CD8-positive, alpha-beta T cell (primary cell): ENCODE measurements at regions of chr1 and their contacts with region 1.

Region 1: DNA sequence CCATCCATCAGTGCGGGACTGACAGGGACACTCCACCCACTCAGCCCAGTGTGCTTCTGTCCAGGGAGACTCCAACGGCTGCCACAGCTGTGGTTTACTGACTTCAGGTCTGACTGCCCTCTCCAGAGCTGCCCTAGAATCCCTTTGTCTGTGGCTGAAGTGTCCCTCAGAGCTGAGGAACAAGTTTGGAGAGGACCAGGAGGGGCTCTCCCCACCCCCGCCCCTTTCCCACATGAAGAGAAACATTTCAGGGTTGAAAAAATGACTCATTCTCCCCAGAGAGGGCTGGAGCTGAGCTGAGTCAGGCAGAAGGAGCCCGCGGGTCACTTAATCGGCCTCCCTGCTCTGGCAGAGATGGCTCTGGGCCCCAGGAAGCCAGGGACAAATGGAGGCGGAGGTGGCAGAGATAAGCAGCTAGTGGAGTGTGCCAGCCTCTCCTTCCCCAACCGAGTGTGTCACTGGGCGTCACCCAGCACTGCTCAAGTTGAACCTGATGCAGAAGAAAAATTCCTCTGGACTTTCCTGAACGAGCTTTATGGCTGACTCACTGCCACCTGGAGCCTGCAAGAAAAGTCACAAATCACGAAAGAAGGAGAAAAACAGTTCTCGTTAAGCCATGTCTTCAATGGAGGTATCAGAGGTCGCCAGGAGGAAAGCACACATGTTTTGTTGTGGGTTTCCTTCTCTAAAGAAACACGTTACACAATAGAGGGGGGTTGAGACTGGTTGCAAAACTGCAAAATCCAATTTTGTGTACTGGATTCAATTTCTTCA is 34.3 kb upstream of the ECE1 start:
- DNase-seq: peak in 8 of 9 experiments; percentile 26 to 71 (median 64)
- ATAC-seq: peak; percentile 64
- H3K4me3 ChIP-seq: peak overlapping the region in 1 of 2 experiments; percentile 4
- H3K4me3 Mint-ChIP-seq: peak overlapping the region; percentile 76
- H3K27ac ChIP-seq: peak overlapping the region; percentile 13 to 51
- H3K27ac Mint-ChIP-seq: peak overlapping the region; percentile 96
- H3K4me1 ChIP-seq: peaks cover 61% of the 10 kb centered on the region
- H3K4me1 Mint-ChIP-seq: peaks cover 74% of the 10 kb centered on the region
- H3K27me3 ChIP-seq: no peaks in the 10 kb centered on the region
- H3K27me3 Mint-ChIP-seq: no peaks in the 10 kb centered on the region
- CTCF ChIP-seq: no peak

Region 2: GRCh38 chr1:21287905-21288514 is 36.5 kb before region 1 on chr1:
- CTCF ChIA-PET with region 1: interaction called, 31 read pairs
- POLR2A ChIA-PET with region 1: interaction called, 62 read pairs
- intact Hi-C with region 1: no loop called
- DNase-seq: no peak
- ATAC-seq: no peak
- H3K4me3 ChIP-seq: no peak overlapping the region
- H3K4me3 Mint-ChIP-seq: peak overlapping the region; percentile 40
- H3K27ac ChIP-seq: no peak overlapping the region
- H3K27ac Mint-ChIP-seq: peak overlapping the region; percentile 37
- H3K4me1 ChIP-seq: peaks cover 50% of the 10 kb centered on the region
- H3K4me1 Mint-ChIP-seq: peaks cover 51% of the 10 kb centered on the region
- H3K27me3 ChIP-seq: no peaks in the 10 kb centered on the region
- H3K27me3 Mint-ChIP-seq: no peaks in the 10 kb centered on the region
- CTCF ChIP-seq: no peak

Region 3: DNA sequence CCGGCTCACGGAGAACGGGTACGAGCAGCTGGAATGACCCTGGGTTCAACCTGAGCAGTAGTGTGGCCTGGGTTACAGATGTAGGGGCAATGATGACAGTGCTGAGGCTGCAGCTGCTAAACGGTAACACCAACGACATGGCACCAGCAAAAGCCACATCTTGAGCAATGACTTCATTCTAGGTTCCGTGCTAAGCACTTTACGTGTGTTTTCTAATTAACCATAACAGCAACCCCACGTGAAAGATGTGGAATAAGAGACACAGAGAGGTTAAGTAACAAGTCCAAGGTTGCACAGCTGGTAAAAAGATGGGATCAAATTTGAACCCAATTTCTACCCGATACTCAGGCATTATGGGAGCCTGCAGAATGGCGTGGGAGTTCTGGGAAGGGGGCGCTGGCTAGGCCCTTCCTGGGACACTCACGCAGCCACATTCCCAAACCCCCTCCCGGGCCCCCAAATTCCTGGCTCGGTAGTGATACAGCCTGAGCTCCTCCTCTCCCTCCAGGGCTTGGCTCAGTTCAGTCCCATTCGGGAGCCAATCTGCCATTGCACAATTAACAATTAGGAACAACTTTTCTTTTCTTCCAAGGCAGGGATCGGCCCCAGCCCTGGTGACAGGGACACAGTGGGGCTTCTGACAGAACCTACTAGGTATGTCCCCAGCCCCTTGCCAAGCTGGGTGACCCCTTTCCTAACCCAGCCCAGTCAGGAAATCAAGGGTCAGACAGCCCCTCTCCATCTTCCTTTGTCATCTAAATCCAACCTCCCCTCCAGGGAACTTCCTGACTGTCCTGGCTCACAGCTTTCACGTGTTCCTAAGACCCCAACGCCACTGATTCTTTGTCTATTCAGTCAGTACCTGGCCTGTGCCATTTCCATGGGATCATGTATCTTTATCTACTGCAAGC is 10.4 kb before region 1 on chr1:
- CTCF ChIA-PET with region 1: interaction called, 5 read pairs
- POLR2A ChIA-PET with region 1: interaction called, 10 read pairs
- intact Hi-C with region 1: no loop called
- DNase-seq: no peak
- ATAC-seq: no peak
- H3K4me3 ChIP-seq: no peak overlapping the region
- H3K4me3 Mint-ChIP-seq: no peak overlapping the region
- H3K27ac ChIP-seq: no peak overlapping the region
- H3K27ac Mint-ChIP-seq: no peak overlapping the region
- H3K4me1 ChIP-seq: peaks cover 3% of the 10 kb centered on the region
- H3K4me1 Mint-ChIP-seq: peaks cover 34% of the 10 kb centered on the region
- H3K27me3 ChIP-seq: no peaks in the 10 kb centered on the region
- H3K27me3 Mint-ChIP-seq: no peaks in the 10 kb centered on the region
- CTCF ChIP-seq: no peak